Astrocyte of the cerebellum (primary cell): ENCODE measurements at regions of chr3 and their contacts with region 1.

Region 1: DNA sequence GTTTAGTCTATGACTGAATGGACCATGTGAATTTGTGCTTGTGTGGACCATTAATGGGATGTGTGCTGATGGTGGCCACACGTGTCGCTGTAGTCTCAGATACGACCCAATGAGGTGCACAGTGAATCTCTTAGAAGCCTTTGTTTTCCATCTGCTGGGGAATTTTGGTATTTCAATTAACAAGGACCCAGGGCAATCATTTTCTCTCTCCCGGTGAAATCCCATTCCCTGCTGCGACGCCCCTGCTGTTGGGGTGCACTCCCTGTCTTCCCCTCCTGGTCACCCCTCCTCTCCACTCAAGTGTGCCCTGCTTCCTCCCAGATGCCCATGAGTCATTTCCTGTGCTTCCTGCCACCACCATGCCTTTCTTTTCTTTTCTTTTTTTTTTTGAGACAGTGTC is 32.7 kb downstream of the EBLN2 start:
- DNase-seq: no peak
- H3K4me3 ChIP-seq: no peak overlapping the region
- CTCF ChIP-seq: peak; percentile 7

Region 2: DNA sequence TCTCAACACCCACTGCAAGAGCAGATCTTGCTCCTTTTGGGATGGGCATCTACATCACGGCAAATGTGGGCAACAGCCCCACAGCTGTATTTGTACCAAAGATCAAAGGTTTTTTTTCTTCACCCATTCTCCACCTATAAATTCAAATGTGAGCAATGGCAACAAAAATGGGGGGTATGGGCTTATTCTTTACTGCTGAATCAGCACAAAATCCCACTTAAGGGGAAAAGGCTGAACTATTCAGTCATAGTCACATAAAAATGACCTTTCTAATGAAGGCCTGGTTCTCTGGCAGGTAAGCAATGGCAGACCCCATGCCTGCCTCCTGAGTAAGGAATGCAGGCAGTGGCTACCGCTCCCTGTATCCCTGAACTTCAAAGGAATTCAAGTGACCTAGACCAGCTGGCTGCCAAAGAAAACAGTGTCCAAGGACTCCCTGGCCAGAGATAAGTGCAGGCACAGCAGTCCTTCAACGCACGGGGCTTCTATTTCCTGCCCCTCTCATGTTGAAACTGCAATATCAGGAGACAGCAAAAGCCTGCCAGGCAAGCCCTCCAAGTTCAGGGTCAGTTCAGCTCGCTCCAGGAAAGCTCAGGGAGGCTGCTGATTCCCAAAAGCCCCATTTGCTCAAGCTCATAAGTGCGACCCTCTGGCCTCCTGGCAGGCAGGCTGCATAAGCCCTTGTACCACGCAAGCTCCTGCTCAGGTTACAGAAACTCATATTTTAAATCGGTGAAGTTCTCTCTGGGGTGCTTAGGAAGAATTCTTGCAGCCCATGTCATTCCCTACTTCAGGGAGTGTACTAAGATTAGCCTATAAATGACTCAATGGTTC is 396.5 kb after region 1 on chr3:
- in situ Hi-C with region 1: loop called (anchors 10 kb)
- DNase-seq: peak; percentile 73
- H3K4me3 ChIP-seq: no peak overlapping the region
- CTCF ChIP-seq: no peak